K562 (cell line): ENCODE measurements at regions of chr3 and their contacts with region 1.

Region 1: GRCh38 chr3:136752422-136753325 is 496 bp upstream of the STAG1 start:
- DNase-seq: peak; percentile 86 to 96 (median 90)
- ATAC-seq: peak; percentile 88
- H3K4me3 ChIP-seq: peak overlapping the region; percentile 57
- H3K27ac ChIP-seq: peak overlapping the region; percentile 98
- H3K4me1 ChIP-seq: peaks cover 0 to 11% of the 10 kb centered on the region in 2 experiments; a peak in 3 of 5 replicates
- H3K27me3 ChIP-seq: no peaks in the 10 kb centered on the region
- CTCF ChIP-seq: peak in 2 of 3 experiments; percentile 25 to 41; a peak in 3 of 6 replicates
- EP300 ChIP-seq: 0 out of 2 replicates have a peak, but pooled peaks have one; percentile 20
- POLR2A ChIP-seq: peak; percentile 86
- RAD21 ChIP-seq: peak; percentile 31 to 62; a peak in 3 of 4 replicates

Region 2: GRCh38 chr3:136250226-136250902 is 502.3 kb before region 1 on chr3 and contains the start of gene PCCB:
- CTCF ChIA-PET with region 1: no interaction called
- POLR2A ChIA-PET with region 1: no interaction called
- in situ Hi-C with region 1: no loop called
- intact Hi-C with region 1: loop called (anchors 5 kb)
- DNase-seq: peak; percentile 84 to 92 (median 88)
- ATAC-seq: peak; percentile 97
- H3K4me3 ChIP-seq: peak within 1 kb of the TSS; percentile 58
- H3K27ac ChIP-seq: peak within 1 kb of the TSS; percentile 97
- H3K4me1 ChIP-seq: peaks cover 14 to 20% of the 10 kb centered on the region in 2 experiments; a peak in 4 of 5 replicates
- H3K27me3 ChIP-seq: no peaks in the 10 kb centered on the region
- CTCF ChIP-seq: peak; percentile 48 to 60 (median 53)
- EP300 ChIP-seq: no peak
- POLR2A ChIP-seq: peak; percentile 92
- RAD21 ChIP-seq: peak; percentile 16; a peak in 1 of 4 replicates
- polyA plus RNA-seq, gene PCCB: 69.5 to 83.7 TPM

Region 3: DNA sequence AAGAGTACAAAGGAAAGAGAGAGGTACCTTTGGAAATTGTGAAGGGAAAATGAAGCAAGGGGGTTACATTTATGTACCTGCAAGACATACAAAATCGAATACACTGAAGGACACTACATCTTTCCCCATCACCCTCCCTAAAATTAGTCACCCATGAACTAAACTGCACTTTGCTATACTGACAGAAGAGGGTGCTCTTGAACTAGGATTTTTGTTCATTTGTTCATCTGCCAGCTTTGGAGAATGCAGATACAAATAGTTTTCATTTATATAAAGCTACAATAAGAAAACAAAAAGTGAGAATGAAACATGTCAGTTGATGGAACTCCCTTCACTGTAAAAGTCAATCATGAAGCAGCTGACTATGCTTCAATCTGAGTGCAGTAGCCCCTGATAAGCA is 446.8 kb before region 1 on chr3:
- CTCF ChIA-PET with region 1: no interaction called
- POLR2A ChIA-PET with region 1: no interaction called
- in situ Hi-C with region 1: no loop called
- intact Hi-C with region 1: no loop called
- DNase-seq: no peak
- ATAC-seq: no peak
- H3K4me3 ChIP-seq: no peak overlapping the region
- H3K27ac ChIP-seq: no peak overlapping the region
- H3K4me1 ChIP-seq: no peaks in the 10 kb centered on the region
- H3K27me3 ChIP-seq: no peaks in the 10 kb centered on the region
- CTCF ChIP-seq: no peak
- EP300 ChIP-seq: no peak
- POLR2A ChIP-seq: no peak
- RAD21 ChIP-seq: no peak

Region 4: GRCh38 chr3:136545664-136546268 is 206.9 kb before region 1 on chr3:
- CTCF ChIA-PET with region 1: interaction called, 37 read pairs
- POLR2A ChIA-PET with region 1: interaction called, 4 read pairs
- in situ Hi-C with region 1: no loop called
- intact Hi-C with region 1: loop called (anchors 1 kb)
- DNase-seq: peak in 2 of 4 experiments; percentile 2 to 3
- ATAC-seq: no peak
- H3K4me3 ChIP-seq: no peak overlapping the region
- H3K27ac ChIP-seq: no peak overlapping the region
- H3K4me1 ChIP-seq: no peaks in the 10 kb centered on the region
- H3K27me3 ChIP-seq: no peaks in the 10 kb centered on the region
- CTCF ChIP-seq: peak in 2 of 3 experiments; percentile 20 to 47; a peak in 3 of 6 replicates
- EP300 ChIP-seq: no peak
- POLR2A ChIP-seq: no peak
- RAD21 ChIP-seq: peak; percentile 40 to 63

Region 5: DNA sequence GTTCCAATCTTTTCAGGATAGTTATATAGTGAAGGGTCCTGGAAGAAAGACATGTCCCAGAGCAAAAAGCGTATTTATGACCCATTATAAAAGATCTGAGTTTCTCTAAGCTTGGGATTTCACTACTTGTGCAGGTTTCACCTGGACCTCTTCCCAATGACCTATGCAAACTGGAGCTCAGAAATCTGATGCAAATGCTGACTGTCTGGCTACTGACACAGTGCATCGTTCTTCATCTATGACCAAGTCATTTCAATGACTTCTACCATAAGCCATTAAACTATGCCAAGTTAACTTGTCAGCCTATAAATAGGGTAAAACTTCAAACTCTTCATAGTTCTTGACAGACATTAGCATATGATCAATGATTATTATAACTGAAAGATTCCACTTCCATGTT is 11.6 kb before region 1 on chr3:
- CTCF ChIA-PET with region 1: no interaction called
- POLR2A ChIA-PET with region 1: interaction called, 10 read pairs
- in situ Hi-C with region 1: no loop called
- intact Hi-C with region 1: no loop called
- DNase-seq: no peak
- ATAC-seq: peak; percentile 44
- H3K4me3 ChIP-seq: no peak overlapping the region
- H3K27ac ChIP-seq: no peak overlapping the region
- H3K4me1 ChIP-seq: peaks cover 2 to 5% of the 10 kb centered on the region in 2 experiments; a peak in 3 of 5 replicates
- H3K27me3 ChIP-seq: no peaks in the 10 kb centered on the region
- CTCF ChIP-seq: no peak
- EP300 ChIP-seq: no peak
- POLR2A ChIP-seq: no peak
- RAD21 ChIP-seq: no peak

Region 6: GRCh38 chr3:136955813-136956212 is 203.1 kb after region 1 on chr3:
- CTCF ChIA-PET with region 1: no interaction called
- POLR2A ChIA-PET with region 1: interaction called, 7 read pairs
- in situ Hi-C with region 1: no loop called
- intact Hi-C with region 1: loop called (anchors 5 kb)
- DNase-seq: peak in 1 of 4 experiments; percentile 22
- ATAC-seq: peak; percentile 19; the same call in 1 of the 3 replicates
- H3K4me3 ChIP-seq: no peak overlapping the region
- H3K27ac ChIP-seq: no peak overlapping the region
- H3K4me1 ChIP-seq: peaks cover 0 to 17% of the 10 kb centered on the region in 2 experiments; a peak in 3 of 5 replicates
- H3K27me3 ChIP-seq: no peaks in the 10 kb centered on the region
- CTCF ChIP-seq: no peak
- EP300 ChIP-seq: no peak
- POLR2A ChIP-seq: no peak
- RAD21 ChIP-seq: no peak

Region 7: DNA sequence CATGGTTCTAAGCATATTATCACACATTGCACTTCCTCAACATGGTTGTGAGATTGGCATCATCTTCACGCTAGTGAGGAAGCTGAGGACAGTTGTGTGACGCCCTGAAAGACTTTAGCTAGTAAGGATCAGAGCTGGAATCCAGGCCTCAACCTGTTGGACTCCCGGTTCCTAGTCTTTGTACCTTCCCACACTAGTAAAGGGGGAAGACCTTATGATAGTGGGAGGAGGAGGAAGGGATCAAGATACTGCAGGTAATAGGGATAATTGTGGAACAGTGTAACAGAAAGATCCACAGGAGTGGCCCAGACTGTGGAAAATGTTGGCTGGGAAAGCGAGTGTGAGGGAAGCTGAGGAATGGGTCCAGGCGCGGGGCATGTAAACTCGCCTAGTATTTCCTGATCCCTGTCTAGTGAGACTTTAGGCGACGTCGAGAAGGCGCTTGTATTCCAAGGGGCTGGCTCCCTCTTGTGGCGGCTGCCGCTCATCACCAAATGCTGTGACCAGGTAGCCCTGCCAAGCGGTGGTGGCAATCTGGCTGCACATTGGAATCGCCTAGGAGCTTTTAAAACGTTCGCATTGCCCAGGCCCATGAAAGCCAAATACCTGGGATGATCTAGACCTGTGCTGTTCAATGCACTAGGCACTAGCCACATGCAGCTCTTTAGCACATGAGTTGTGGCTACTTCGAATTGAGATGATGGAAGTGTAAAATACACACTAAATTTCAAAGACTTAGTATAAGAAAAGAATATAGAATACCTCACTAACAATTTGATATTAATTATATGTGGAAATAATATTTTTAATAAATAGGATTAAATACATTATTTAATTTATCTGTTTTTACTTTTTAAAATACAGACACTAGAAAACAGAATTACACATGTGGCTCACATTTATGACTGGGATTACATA is 1218.5 kb after region 1 on chr3:
- CTCF ChIA-PET with region 1: no interaction called
- POLR2A ChIA-PET with region 1: no interaction called
- in situ Hi-C with region 1: loop called (anchors 25 kb)
- intact Hi-C with region 1: no loop called
- DNase-seq: peak; percentile 42 to 58 (median 52)
- ATAC-seq: peak; percentile 97
- H3K4me3 ChIP-seq: no peak overlapping the region
- H3K27ac ChIP-seq: no peak overlapping the region
- H3K4me1 ChIP-seq: no peaks in the 10 kb centered on the region
- H3K27me3 ChIP-seq: no peaks in the 10 kb centered on the region
- CTCF ChIP-seq: peak; percentile 66 to 82 (median 73)
- EP300 ChIP-seq: no peak
- POLR2A ChIP-seq: no peak
- RAD21 ChIP-seq: peak; percentile 43 to 70; a peak in 3 of 4 replicates